PC-3 (cell line): ENCODE measurements at regions of chr4 and their contacts with region 1.

Region 1: DNA sequence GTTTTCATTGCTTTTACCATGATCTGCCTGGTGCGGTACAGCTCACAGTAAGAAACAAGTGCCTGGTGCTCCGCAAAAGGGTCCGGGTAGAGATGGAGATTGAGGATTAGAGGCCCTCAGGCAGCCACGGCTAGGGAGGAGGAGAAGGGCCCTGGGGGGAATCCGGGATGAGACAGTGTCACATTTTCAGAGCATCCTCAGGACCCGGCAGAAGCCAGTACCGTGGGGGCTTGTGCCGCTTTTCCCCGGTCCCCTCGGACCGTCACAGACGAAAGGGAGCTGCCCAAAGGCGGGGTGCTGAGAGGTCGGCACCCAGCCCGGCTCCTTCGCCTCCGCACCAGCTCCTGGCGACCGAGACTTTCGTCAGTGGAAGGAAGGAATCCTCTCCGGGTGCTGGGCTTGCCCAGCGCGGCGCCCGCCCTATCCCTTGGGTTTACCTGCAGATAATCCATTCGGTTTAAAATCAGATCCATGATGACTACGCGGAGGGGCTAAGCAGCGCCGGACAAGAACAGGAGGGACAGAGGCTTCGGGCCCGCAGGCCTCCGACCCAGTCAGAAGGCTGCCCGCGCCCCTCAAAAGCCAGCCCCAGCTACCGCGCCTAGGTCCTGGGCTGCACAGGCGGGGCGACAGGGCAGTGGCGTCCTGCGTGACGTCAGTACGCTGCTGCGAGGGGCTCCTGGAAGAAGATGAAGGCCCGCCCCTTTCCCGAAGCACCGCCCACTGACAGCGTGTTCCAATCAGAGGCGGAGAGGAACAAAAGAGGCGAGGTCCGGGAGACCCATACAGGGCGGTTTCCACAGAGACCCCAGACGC is at the start of gene BBS7:
- DNase-seq: peak; percentile 90
- ATAC-seq: peak; percentile 95
- H3K4me3 ChIP-seq: peak within 1 kb of the TSS; percentile 94
- H3K27ac ChIP-seq: peak within 1 kb of the TSS; percentile 29; the same call in 1 of the 2 replicates
- H3K4me1 ChIP-seq: no peaks in the 10 kb centered on the region
- H3K27me3 ChIP-seq: no peaks in the 10 kb centered on the region
- CTCF ChIP-seq: no peak
- total RNA-seq, gene BBS7: 5.2 and 10.1 TPM in 2 replicates

Region 2: DNA sequence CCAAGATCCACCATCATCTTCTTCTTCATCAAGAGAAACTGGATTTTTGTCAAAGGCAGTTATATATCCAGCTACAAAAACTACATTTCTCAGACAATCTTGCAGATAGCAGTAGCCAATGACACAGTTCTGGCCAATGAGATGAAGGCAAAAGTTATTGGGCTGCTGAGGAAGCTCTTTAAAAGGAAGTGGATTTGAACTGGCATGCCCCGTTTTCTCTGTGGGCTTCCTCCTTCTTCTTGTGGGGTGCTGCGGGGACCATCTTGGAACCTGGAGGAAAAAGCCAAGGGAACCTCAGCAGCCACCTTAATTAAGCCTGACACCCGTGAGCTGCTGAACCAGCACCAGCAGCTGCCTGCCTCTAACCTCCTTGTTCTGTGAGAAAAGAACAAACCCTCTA is 109.8 kb before region 1 on chr4:
- CTCF ChIA-PET with region 1: no interaction called
- POLR2A ChIA-PET with region 1: interaction called, 11 read pairs
- intact Hi-C with region 1: no loop called
- DNase-seq: no peak
- ATAC-seq: no peak
- H3K4me3 ChIP-seq: no peak overlapping the region
- H3K27ac ChIP-seq: no peak overlapping the region
- H3K4me1 ChIP-seq: no peaks in the 10 kb centered on the region
- H3K27me3 ChIP-seq: no peaks in the 10 kb centered on the region
- CTCF ChIP-seq: no peak